ENCODE measurements at regions of chr2 and their contacts with region 1.

Region 1: DNA sequence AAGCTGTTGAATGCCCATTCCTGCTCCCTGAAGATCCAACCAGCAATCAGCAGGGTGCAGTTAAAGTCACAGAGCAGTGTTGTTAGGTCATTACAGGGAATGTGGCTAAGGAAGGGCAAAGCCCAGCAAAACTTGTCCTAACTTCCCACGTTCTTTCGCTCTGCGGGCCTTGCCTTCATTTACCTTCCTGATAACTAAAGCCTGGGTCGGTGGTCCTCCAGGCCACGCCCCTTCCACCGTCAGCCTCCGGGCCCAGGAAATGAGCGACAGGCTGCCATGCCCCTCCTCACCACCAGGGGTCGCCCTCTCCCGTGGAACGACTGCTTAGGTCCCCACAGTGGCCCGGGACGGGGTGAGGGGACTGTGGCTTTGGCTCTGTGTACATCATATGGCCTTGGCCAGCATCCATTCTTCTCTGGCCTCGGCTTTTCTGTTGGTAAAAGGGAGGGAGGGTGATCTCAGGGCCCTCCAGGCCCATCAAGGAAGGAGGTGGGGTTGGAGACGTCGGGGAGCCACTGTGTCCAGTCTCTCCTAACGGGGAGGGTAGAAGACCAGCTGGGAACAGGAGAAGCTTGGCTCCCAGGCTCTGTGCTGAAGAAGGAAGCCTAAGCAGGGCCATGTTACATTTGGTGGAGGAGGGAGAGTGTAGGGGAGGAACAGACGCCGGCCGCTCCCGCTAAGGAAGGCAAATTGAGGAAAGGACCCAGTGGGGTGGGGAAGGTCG is 2.2 kb downstream of the SH2D6 start:
- DNase-seq: peak; percentile 78 to 96 (median 88)
- ATAC-seq: peak; percentile 68
- H3K4me3 ChIP-seq: peak overlapping the region; percentile 4
- H3K4me3 Mint-ChIP-seq: peak overlapping the region; percentile 80
- H3K27ac ChIP-seq: no peak overlapping the region
- H3K27ac Mint-ChIP-seq: peak overlapping the region; percentile 14
- H3K4me1 ChIP-seq: peaks cover 33% of the 10 kb centered on the region
- H3K4me1 Mint-ChIP-seq: peaks cover 24% of the 10 kb centered on the region
- H3K27me3 ChIP-seq: no peaks in the 10 kb centered on the region
- H3K27me3 Mint-ChIP-seq: no peaks in the 10 kb centered on the region
- CTCF ChIP-seq: peak; percentile 99

Region 2: GRCh38 chr2:85390941-85391669 is 29.6 kb before region 1 on chr2:
- CTCF ChIA-PET with region 1: no interaction called
- POLR2A ChIA-PET with region 1: interaction called, 7 read pairs
- intact Hi-C with region 1: loop called (anchors 1 kb)
- DNase-seq: peak; percentile 66 to 85 (median 72)
- ATAC-seq: peak; percentile 69
- H3K4me3 ChIP-seq: no peak overlapping the region
- H3K4me3 Mint-ChIP-seq: no peak overlapping the region
- H3K27ac ChIP-seq: no peak overlapping the region
- H3K27ac Mint-ChIP-seq: peak overlapping the region; percentile 44
- H3K4me1 ChIP-seq: peaks cover 15% of the 10 kb centered on the region
- H3K4me1 Mint-ChIP-seq: peaks cover 14% of the 10 kb centered on the region
- H3K27me3 ChIP-seq: no peaks in the 10 kb centered on the region
- H3K27me3 Mint-ChIP-seq: no peaks in the 10 kb centered on the region
- CTCF ChIP-seq: peak; percentile 77

Region 3: DNA sequence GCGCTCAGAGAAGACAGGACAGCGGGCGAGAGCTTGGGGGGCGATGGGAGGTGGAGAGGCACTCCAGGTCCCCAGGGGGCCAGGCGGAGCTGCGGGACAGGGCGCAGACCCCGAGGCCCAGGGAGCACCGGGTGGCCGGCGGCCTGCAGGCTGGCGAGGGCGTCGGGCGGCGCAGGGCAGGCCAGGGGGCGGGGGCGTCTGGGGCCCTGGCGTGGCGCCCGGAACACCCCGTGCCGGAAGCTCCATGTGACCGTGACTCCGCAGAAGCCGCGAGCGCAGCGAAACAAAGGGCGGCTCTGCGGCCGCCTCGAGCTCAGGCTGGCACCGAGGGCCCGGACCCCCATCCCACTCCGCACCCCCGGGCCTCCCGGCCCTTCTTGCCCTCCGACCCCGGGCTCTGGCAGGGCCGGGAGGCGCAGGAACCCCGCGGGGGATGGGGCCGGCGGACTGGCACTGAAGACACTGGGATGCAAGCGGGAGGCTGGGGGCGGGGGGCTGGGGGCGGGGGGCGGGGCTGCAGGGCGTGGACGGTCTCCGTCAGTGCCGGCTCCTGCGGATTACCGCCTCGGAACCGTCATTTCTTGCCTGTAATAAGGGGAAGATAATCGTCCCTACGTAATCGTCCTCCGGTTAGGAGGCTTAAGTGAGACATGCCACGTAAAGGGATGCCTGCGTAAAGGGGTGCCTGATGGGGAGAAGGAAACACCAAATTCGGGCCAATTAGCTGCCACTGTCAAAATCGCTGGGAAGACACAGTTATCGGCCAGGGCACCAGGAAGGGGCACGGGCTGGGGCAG is 17.0 kb after region 1 on chr2:
- CTCF ChIA-PET with region 1: interaction called, 7 read pairs
- POLR2A ChIA-PET with region 1: interaction called, 11 read pairs
- intact Hi-C with region 1: no loop called
- DNase-seq: peak; percentile 49 to 91 (median 70)
- ATAC-seq: peak; percentile 82
- H3K4me3 ChIP-seq: peak overlapping the region; percentile 51
- H3K4me3 Mint-ChIP-seq: peak overlapping the region; percentile 90
- H3K27ac ChIP-seq: peak overlapping the region; percentile 55 to 87
- H3K27ac Mint-ChIP-seq: peak overlapping the region; percentile 91
- H3K4me1 ChIP-seq: peaks cover 39% of the 10 kb centered on the region
- H3K4me1 Mint-ChIP-seq: peaks cover 37% of the 10 kb centered on the region
- H3K27me3 ChIP-seq: no peaks in the 10 kb centered on the region
- H3K27me3 Mint-ChIP-seq: no peaks in the 10 kb centered on the region
- CTCF ChIP-seq: no peak

Region 4: DNA sequence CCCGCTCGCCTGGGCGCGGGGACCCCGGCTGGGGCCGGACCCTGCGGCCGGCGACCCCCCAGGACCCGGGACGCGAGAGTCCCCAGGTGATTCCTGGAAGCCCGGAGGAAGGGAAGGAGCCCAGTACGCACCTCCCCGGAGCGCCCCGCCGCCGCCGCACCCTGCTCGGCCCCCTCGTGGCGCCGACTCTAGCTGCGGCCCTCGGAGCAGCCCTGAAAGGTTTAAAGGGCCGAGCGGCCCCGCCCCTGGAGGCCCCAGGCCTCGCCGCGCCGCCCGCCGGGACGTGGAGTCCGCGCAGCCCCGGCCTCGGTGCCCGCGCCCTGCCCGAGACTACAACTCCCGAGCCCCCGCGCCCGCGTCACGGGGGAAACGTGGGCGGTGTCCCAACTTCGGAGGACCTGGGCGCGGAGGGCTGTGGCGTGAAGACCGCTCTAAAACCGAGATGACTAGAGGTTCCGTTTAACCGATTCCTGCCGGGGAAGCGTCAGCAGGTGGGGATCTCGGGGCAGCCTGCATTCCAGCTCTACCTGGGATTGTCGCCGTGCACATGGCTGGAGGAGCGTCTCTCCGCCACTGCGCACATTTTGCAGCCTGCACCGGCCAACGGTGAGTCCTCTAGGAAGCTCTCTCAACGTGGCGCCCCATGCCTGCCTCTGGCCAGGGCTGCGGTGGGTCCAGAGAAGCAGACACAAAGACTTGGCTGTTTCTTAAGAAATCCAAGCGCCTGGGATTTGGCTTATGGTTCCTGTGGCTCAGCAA is 182.0 kb after region 1 on chr2 and contains the start of gene TMEM150A:
- CTCF ChIA-PET with region 1: no interaction called
- POLR2A ChIA-PET with region 1: no interaction called
- intact Hi-C with region 1: loop called in 1 of 2 experiments (anchors 5 kb)
- DNase-seq: peak; percentile 67 to 93 (median 85)
- ATAC-seq: peak; percentile 90
- H3K4me3 ChIP-seq: peak within 1 kb of the TSS; percentile 97
- H3K4me3 Mint-ChIP-seq: peak within 1 kb of the TSS; percentile 94
- H3K27ac ChIP-seq: peak within 1 kb of the TSS; percentile 40 to 44
- H3K27ac Mint-ChIP-seq: peak within 1 kb of the TSS; percentile 76
- H3K4me1 ChIP-seq: peaks cover 39% of the 10 kb centered on the region
- H3K4me1 Mint-ChIP-seq: peaks cover 30% of the 10 kb centered on the region
- H3K27me3 ChIP-seq: no peaks in the 10 kb centered on the region
- H3K27me3 Mint-ChIP-seq: no peaks in the 10 kb centered on the region
- CTCF ChIP-seq: peak; percentile 31
- total RNA-seq, gene TMEM150A: 6.6 to 7.0 TPM

Region 5: GRCh38 chr2:85707304-85707703 is 286.6 kb after region 1 on chr2:
- CTCF ChIA-PET with region 1: no interaction called
- POLR2A ChIA-PET with region 1: no interaction called
- intact Hi-C with region 1: loop called in 1 of 2 experiments (anchors 2 kb)
- DNase-seq: peak in 11 of 14 experiments; percentile 21 to 87 (median 50)
- ATAC-seq: peak; percentile 80
- H3K4me3 ChIP-seq: no peak overlapping the region
- H3K4me3 Mint-ChIP-seq: no peak overlapping the region
- H3K27ac ChIP-seq: no peak overlapping the region
- H3K27ac Mint-ChIP-seq: no peak overlapping the region
- H3K4me1 ChIP-seq: peaks cover 14% of the 10 kb centered on the region
- H3K4me1 Mint-ChIP-seq: peaks cover 13% of the 10 kb centered on the region
- H3K27me3 ChIP-seq: peaks cover 0 to 4% of the 10 kb centered on the region in 2 experiments
- H3K27me3 Mint-ChIP-seq: peaks cover 13% of the 10 kb centered on the region
- CTCF ChIP-seq: peak; percentile 83

Region 6: GRCh38 chr2:85804583-85804982 is 383.9 kb after region 1 on chr2:
- CTCF ChIA-PET with region 1: no interaction called
- POLR2A ChIA-PET with region 1: no interaction called
- intact Hi-C with region 1: no loop called
- DNase-seq: peak in 6 of 14 experiments; percentile 11 to 43 (median 30)
- ATAC-seq: peak; percentile 58
- H3K4me3 ChIP-seq: no peak overlapping the region
- H3K4me3 Mint-ChIP-seq: no peak overlapping the region
- H3K27ac ChIP-seq: no peak overlapping the region
- H3K27ac Mint-ChIP-seq: no peak overlapping the region
- H3K4me1 ChIP-seq: peaks cover 9% of the 10 kb centered on the region
- H3K4me1 Mint-ChIP-seq: peaks cover 14% of the 10 kb centered on the region
- H3K27me3 ChIP-seq: peaks cover 0 to under 1% of the 10 kb centered on the region in 2 experiments
- H3K27me3 Mint-ChIP-seq: peaks cover 5% of the 10 kb centered on the region
- CTCF ChIP-seq: peak; percentile 32